Sigmoid colon (tissue), 7 donors: ENCODE measurements at regions of chr5 and their contacts with region 1.

Region 1: GRCh38 chr5:180810210-180810958 is 7.8 kb upstream of the MGAT1 start:
- DNase-seq: peak; percentile 98
- H3K4me3 ChIP-seq: peak overlapping the region; percentile 59 to 77 (median 68)
- H3K27ac ChIP-seq: peak overlapping the region; percentile 93 to 99 (median 98)
- H3K4me1 ChIP-seq: peaks cover 0 to 48% (median 44%) of the 10 kb centered on the region in 4 donors
- H3K27me3 ChIP-seq: no peaks in the 10 kb centered on the region
- CTCF ChIP-seq: no peak
- EP300 ChIP-seq: peak in 1 of 4 donors; percentile 58
- POLR2A ChIP-seq: peak in 1 of 2 donors; percentile 71

Region 2: DNA sequence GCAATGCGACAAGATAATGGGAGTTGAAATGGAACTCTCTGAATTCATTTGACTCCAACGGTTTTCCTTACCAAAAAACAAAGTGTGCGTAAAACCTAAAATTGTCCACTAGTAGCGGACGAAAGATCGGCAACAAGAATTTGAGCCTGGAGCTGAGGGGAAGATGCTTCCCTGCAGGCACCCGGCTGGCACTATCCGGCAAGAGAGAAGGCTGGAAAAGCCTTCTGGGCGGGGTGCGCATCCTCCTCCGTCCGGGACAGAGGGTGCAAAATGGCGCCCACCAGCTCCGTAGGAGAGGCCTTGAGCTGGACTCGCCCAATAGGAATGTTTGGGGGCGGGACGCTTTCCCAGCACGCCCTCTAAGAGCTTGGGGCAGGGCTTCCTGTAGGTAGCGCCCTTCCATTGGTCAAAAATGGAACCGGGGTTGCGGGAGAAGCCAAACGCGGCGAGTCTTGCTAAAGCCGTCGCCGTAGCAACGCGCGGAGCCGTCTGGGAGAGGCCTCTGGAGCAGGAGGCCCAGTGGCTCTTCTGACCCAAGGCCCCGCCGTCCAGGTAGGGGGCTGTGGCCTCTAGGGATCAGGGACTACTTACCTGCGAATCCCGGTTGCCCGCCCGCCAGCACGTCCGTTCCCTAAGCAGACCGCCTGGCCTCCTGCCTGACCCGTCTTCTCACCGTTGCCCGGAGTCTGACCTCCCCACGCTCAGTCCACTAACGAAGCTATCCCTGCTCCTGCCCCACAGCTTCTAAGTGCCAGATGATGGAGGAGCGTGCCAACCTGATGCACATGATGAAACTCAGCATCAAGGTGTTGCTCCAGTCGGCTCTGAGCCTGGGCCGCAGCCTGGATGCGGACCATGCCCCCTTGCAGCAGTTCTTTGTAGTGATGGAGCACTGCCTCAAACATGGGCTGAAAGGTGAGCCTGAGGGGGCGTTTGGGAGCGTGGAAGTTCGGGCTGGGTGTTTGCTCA is 1250.8 kb before region 1 on chr5:
- intact Hi-C with region 1: loop called (anchors 10 kb)
- DNase-seq: peak; percentile 99
- H3K4me3 ChIP-seq: peak overlapping the region; percentile 46 to 56 (median 54)
- H3K27ac ChIP-seq: peak overlapping the region; percentile 85 to 93 (median 89)
- H3K4me1 ChIP-seq: peaks cover 0 to 16% (median 15%) of the 10 kb centered on the region in 4 donors
- H3K27me3 ChIP-seq: no peaks in the 10 kb centered on the region
- CTCF ChIP-seq: no peak
- EP300 ChIP-seq: no peak
- POLR2A ChIP-seq: peak; percentile 89 to 94

Region 3: DNA sequence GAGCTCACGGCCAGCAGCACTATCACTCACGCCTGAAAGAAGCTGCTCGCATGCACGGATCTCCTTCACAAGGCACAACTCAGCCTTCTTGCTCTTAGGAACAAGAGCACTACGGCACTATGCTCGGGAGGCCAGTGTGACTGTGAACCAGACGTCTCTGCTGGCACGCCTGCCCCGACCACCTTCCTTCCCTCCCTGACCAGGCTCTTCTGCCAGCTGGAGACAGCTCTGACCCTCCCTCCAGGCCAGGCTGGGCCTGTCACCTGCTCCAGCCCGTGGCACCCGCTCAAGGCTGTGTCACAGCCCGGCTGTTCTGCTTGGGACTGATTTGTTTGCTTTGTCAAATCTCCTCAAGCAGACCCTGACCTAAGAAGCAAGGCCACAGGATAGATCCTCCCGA is 909.7 kb before region 1 on chr5:
- intact Hi-C with region 1: no loop called
- DNase-seq: no peak
- H3K4me3 ChIP-seq: no peak overlapping the region
- H3K27ac ChIP-seq: no peak overlapping the region
- H3K4me1 ChIP-seq: no peaks in the 10 kb centered on the region
- H3K27me3 ChIP-seq: no peaks in the 10 kb centered on the region
- CTCF ChIP-seq: no peak
- EP300 ChIP-seq: no peak
- POLR2A ChIP-seq: no peak

Region 4: DNA sequence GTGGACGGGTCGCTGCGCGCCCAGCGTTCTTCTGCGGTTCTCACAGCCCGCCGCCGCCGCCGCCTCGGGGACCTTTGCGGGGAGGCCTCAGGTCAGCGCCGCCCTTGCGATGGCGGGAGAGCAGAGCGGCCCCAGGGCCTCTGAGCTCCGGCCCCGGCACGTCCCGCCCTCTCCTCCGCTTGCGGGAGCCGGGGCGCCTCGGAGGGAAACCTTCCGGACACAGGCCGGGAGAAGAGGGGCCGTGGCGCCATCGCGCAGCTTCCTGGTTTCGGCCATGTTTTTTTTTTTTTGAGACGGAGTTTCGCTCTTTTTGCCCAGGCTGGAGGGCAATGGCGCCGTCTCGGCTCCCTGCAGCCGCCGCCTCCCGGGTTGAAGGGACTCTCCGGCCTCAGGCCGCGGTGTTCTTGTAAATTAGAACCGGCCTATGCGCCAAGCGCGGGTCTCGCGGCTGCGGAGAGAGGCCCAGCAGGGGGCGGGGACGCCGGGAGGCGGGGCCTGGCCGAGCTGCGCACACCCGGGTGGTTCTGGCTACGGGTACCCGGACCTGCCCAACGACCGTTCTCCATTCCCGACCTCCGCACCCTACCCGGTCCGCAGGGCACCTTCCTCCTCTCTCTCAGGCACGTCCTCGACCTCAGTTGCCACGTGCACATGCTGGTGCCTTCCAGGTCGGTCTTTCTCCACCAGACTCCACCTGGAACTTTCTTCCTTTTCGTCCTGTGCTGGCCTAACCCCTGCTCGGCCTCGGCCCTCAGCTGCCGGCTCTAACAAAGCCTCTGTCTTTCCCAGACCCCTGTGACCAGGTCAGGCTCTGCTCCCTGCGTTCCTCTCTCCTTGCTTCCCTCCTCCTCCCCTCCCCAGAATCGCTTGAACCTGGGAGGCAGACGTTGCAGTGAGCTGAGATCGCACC is 21.0 kb after region 1 on chr5:
- intact Hi-C with region 1: loop called (anchors 1 kb)
- DNase-seq: peak; percentile 94
- H3K4me3 ChIP-seq: peak overlapping the region; percentile 83 to 93 (median 88)
- H3K27ac ChIP-seq: peak overlapping the region; percentile 96 to 100 (median 97)
- H3K4me1 ChIP-seq: peaks cover 0 to 34% (median 25%) of the 10 kb centered on the region in 4 donors
- H3K27me3 ChIP-seq: no peaks in the 10 kb centered on the region
- CTCF ChIP-seq: peak in 2 of 4 experiments; percentile 13 to 19
- EP300 ChIP-seq: peak in 2 of 4 donors; percentile 11 to 13
- POLR2A ChIP-seq: peak; percentile 81 to 84

Region 5: DNA sequence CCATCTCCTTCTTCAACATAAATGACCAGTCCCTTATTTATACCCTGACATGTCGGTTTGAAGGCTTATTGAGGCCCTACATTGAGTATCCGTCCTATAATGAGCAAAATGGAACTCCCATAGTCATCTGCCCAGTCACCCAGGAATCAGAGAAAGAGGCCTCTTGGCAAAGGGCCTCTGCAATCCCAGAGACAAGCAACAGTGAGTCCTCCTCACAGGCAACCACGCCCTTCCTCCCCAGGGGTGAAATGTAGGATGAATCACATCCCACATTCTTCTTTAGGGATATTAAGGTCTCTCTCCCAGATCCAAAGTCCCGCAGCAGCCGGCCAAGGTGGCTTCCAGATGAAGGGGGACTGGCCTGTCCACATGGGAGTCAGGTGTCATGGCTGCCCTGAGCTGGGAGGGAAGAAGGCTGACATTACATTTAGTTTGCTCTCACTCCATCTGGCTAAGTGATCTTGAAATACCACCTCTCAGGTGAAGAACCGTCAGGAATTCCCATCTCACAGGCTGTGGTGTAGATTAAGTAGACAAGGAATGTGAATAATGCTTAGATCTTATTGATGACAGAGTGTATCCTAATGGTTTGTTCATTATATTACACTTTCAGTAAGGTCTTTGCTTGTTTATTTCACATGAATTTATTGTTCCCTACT is 140.0 kb after region 1 on chr5:
- intact Hi-C with region 1: no loop called
- DNase-seq: no peak
- H3K4me3 ChIP-seq: no peak overlapping the region
- H3K27ac ChIP-seq: no peak overlapping the region
- H3K4me1 ChIP-seq: no peaks in the 10 kb centered on the region
- H3K27me3 ChIP-seq: no peaks in the 10 kb centered on the region
- CTCF ChIP-seq: no peak
- EP300 ChIP-seq: no peak
- POLR2A ChIP-seq: no peak

Region 6: GRCh38 chr5:180990086-180990881 is 179.9 kb after region 1 on chr5:
- intact Hi-C with region 1: no loop called
- DNase-seq: no peak
- H3K4me3 ChIP-seq: no peak overlapping the region
- H3K27ac ChIP-seq: no peak overlapping the region
- H3K4me1 ChIP-seq: no peaks in the 10 kb centered on the region
- H3K27me3 ChIP-seq: no peaks in the 10 kb centered on the region
- CTCF ChIP-seq: no peak
- EP300 ChIP-seq: no peak
- POLR2A ChIP-seq: no peak

Region 7: DNA sequence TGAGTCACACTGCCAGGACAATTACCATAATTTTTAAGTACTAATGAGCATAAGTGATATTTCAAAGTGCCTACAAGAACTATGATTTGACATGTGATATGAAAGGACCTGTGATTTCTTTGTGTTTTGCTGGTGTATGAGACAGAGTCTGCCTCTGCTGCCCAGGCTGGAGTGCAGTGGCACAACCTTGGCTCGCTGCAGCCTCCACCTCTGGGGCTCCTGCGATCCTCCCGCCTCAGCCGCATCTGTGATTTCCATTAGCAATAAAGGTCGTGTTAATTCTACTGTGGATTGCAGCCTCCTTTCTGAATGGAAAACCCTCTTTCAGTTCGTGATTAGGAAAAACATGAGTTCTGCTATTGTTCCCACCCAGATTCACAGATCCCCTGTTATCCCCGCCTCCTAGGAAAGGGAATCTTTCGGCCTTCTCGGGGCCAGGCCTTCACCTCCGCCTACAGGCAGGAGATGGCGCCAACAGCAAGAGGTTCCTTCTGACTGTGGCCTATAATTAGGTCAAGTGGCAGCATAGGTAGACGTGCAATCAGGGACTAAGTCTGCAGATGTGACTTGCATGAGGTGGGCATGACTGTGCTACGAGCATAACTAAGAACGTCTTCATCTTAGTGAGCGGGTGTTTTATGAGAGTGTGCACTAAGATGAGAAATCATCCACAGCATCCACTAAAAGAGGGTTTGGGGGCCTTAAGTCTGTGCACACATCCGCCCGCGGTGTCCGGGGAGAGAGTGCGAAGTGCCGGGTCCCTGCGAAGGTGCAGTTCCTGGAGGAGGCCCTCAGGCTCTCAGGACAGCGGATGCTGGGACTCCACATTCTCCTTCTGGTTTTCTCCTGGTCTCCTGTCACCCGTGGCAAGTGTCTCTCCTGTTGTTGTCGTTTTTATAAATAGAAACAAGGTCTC is 371.5 kb after region 1 on chr5:
- intact Hi-C with region 1: loop called (anchors 10 kb)
- DNase-seq: peak; percentile 77
- H3K4me3 ChIP-seq: no peak overlapping the region
- H3K27ac ChIP-seq: peak overlapping the region in 1 of 4 donors; percentile 34
- H3K4me1 ChIP-seq: peaks cover 0 to 18% (median 8%) of the 10 kb centered on the region in 4 donors
- H3K27me3 ChIP-seq: no peaks in the 10 kb centered on the region
- CTCF ChIP-seq: peak; percentile 47 to 69 (median 62)
- EP300 ChIP-seq: no peak
- POLR2A ChIP-seq: no peak

Region 8: GRCh38 chr5:181243512-181244343 is 433.3 kb after region 1 on chr5 and contains the start of gene RACK1:
- intact Hi-C with region 1: loop called (anchors 5 kb)
- DNase-seq: peak; percentile 93
- H3K4me3 ChIP-seq: peak within 1 kb of the TSS; percentile 66 to 79 (median 74)
- H3K27ac ChIP-seq: peak within 1 kb of the TSS; percentile 95 to 99 (median 96)
- H3K4me1 ChIP-seq: peaks cover 0 to 62% (median 50%) of the 10 kb centered on the region in 4 donors
- H3K27me3 ChIP-seq: no peaks in the 10 kb centered on the region
- CTCF ChIP-seq: no peak
- EP300 ChIP-seq: no peak
- POLR2A ChIP-seq: peak; percentile 54 to 69
- total RNA-seq, gene RACK1: 2,029 to 2,209 (median 2,163) TPM

Region 9: DNA sequence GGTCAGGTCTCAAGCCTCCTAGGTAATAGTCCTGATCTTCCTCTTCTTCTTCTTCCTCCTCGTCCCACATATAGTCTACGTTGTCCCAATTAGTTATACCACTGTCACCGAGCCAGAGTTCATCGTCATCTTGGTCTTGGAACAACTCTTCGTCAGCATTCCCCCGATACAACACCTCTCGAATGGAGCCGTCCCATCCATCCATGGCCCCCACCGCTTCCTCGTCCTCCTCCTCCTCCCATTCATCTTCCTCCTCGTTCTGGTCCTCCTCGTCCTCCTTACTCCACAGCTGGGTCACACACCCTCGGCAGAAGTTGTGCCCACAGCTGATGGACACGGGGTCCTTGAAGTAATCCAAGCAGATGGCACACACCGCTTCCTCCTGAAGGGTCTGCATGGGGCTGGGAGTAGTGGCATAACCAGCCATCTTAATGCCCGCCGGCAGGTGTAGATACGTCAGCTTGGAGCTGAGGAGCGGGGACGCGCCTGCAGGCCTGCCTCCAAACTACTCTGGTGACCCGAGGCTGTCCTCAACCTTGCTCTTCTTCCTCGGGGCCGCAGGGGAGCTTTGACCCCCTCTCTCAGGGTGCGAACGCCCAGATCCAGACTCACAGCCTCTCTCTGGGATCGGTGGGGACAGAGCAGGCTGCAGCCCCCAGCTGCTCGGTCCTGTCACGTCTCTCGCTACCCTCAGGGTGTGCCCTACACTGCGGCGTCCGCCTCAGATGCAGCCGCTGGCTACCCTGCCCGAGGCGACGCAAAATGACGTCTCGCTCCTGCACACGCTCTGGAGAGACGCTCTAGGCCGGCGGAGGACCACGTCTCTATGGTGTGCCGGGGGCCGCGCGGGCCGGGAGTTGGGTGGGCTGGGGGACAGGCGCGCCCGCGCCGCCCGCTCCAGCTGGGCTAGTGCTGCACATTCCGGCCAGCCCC is 450.3 kb after region 1 on chr5 and contains the start of gene TRIM52:
- intact Hi-C with region 1: loop called (anchors 5 kb)
- DNase-seq: peak; percentile 93
- H3K4me3 ChIP-seq: peak within 1 kb of the TSS; percentile 71 to 98 (median 86)
- H3K27ac ChIP-seq: peak within 1 kb of the TSS; percentile 94 to 100 (median 100)
- H3K4me1 ChIP-seq: peaks cover 0 to 54% (median 43%) of the 10 kb centered on the region in 4 donors
- H3K27me3 ChIP-seq: no peaks in the 10 kb centered on the region
- CTCF ChIP-seq: no peak
- EP300 ChIP-seq: no peak
- POLR2A ChIP-seq: peak; percentile 86 to 88
- total RNA-seq, gene TRIM52: 7.1 to 26.9 (median 16.0) TPM